ENCODE measurements at regions of chr5 and their contacts with region 1.

Region 1: DNA sequence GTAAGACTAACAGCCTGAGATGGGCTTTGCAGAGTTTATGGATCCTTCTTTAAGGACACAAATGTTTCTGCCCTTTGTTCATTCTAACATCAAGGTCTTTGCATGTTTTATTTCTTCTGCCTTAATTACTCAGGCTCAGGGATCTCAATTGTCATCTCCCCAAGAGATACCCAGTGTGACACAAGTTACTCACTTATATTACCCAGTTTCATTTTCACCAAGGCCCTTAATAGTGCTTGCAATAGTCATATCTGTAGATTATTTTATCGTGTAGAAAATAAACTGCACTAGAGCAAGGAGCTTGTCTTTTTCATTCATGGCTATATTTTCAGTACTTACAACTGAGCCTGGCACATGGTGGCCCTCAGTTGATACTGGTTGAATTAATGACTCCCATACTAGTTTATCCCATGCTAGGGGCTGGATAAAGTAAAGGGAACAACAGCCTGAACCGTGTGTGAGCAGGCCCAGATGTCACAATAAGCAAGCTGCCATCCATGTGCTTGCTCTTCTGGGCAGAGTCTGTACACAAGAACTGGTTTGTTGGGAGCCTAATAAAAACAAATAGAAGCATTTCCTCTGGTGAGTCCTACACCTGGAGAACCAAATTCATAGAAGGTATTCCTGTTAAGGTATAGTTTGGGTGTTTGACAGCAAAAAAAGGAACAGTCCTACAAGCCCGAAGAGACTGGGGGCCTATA is 112.5 kb upstream of the CD180 start:
- DNase-seq: no peak
- H3K4me3 ChIP-seq: no peak overlapping the region
- H3K27ac ChIP-seq: no peak overlapping the region
- H3K4me1 ChIP-seq: no peaks in the 10 kb centered on the region
- H3K27me3 ChIP-seq: no peaks in the 10 kb centered on the region
- CTCF ChIP-seq: no peak

Region 2: DNA sequence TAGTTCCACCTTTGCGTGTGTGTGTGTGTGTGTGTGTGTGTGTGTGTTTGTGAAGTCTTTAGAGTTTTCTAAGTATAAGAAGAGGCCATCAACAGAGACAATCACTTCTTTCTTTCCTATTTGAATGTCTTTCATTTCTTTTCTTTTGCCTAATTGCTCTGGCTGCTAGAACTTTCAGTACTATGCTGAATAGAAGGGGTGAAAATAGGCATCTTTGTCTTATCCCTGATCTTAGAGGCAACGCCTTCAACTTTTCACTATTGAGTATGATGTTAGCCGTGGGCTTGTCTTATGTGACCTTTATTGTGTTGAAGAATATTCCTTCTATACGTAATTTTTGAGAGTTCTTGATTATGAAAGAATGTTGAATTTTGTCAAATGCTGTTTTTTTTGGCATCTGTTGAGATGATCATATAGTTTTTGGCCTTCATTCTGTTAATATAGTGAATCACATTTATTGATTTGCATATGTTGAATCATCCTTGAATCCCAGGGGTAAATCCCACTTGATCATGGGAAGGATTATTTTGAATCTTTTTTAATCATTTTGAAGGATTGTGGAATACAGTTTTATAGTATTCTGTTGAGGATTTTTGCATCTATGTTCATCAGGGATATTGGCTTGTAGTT is 22.3 kb after region 1 on chr5:
- CTCF ChIA-PET with region 1: no interaction called
- POLR2A ChIA-PET with region 1: no interaction called
- intact Hi-C with region 1: loop called (anchors 2 kb)
- DNase-seq: no peak
- H3K4me3 ChIP-seq: no peak overlapping the region
- H3K27ac ChIP-seq: no peak overlapping the region
- H3K4me1 ChIP-seq: no peaks in the 10 kb centered on the region
- H3K27me3 ChIP-seq: no peaks in the 10 kb centered on the region
- CTCF ChIP-seq: no peak